ENCODE measurements at regions of chr2 and their contacts with region 1.

Region 1: GRCh38 chr2:128736689-128737545 is 418.2 kb upstream of the HS6ST1 start:
- DNase-seq: peak; percentile 41
- ATAC-seq: peak; percentile 91
- H3K4me3 ChIP-seq: peak overlapping the region in 1 of 3 experiments; percentile 36; a peak in 1 of 6 replicates
- H3K27ac ChIP-seq: no peak overlapping the region
- H3K4me1 ChIP-seq: no peaks in the 10 kb centered on the region
- H3K27me3 ChIP-seq: peaks cover 0 to 52% of the 10 kb centered on the region in 2 experiments; a peak in 4 of 5 replicates
- CTCF ChIP-seq: peak; percentile 95
- EP300 ChIP-seq: no peak
- POLR2A ChIP-seq: no peak
- RAD21 ChIP-seq: peak; percentile 70

Region 2: DNA sequence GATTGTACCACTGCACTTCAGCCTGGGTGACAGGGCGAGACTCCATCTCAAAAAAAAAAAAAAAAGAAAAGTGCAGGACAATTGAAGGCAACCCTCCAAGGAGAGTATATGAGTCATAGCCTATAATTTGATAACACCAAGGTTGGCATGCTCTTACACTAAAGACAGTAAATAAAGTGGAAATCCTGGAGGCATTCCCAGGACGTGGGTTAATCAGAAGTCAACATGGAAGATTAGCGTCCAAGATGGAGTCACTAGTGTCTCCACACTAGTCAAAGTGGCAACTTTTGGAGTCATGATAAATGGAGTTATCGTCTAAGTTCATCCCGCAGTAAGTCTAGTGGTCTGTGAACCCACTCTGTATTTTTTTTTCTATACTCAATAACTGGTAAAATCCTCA is 667.1 kb before region 1 on chr2:
- CTCF ChIA-PET with region 1: no interaction called
- POLR2A ChIA-PET with region 1: no interaction called
- in situ Hi-C with region 1: loop called (anchors 25 kb)
- intact Hi-C with region 1: no loop called
- DNase-seq: no peak
- ATAC-seq: no peak
- H3K4me3 ChIP-seq: no peak overlapping the region
- H3K27ac ChIP-seq: no peak overlapping the region
- H3K4me1 ChIP-seq: peaks cover 15% of the 10 kb centered on the region
- H3K27me3 ChIP-seq: no peaks in the 10 kb centered on the region
- CTCF ChIP-seq: no peak
- EP300 ChIP-seq: no peak
- POLR2A ChIP-seq: no peak
- RAD21 ChIP-seq: no peak

Region 3: DNA sequence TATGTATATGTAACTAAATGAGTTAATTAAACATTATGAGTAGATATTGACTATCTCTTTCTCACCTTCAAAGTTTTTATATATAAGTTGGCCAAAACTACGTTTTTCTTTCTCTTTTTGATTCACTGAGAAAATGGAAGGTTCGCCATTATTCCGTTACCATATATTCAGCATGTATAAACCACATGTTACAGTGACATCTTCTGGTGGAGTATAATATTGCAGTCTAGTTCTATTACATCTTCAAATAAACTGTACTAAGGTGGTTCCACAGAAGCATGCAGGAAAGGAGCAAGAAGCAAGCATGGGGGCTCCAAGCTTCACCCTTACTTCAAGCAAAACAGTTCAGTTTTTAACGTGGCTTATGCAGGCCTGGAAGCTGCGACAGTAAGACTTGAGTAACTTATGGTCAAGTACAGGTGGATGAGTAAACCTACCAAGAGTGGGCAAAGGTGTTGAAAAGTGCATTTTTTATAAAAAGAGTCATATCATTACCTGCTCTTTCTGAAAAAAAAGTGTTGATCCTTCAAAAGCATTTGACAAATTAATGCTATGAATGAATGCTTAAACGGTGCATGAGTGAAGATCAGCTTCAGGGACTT is 1112.7 kb after region 1 on chr2:
- CTCF ChIA-PET with region 1: interaction called, 15 read pairs
- POLR2A ChIA-PET with region 1: no interaction called
- in situ Hi-C with region 1: no loop called
- intact Hi-C with region 1: loop called (anchors 10 kb)
- DNase-seq: peak; percentile 69
- ATAC-seq: peak; percentile 80
- H3K4me3 ChIP-seq: no peak overlapping the region
- H3K27ac ChIP-seq: no peak overlapping the region
- H3K4me1 ChIP-seq: no peaks in the 10 kb centered on the region
- H3K27me3 ChIP-seq: 0 out of 5 replicates have a peak, but pooled peaks cover 0 to 3% of the 10 kb centered on the region in 2 experiments
- CTCF ChIP-seq: peak; percentile 83
- EP300 ChIP-seq: no peak
- POLR2A ChIP-seq: no peak
- RAD21 ChIP-seq: peak; percentile 44; the same call in 1 of the 2 replicates